HCT116 (cell line): ENCODE measurements at regions of chr6 and their contacts with region 1.

Region 1: GRCh38 chr6:170265655-170266054 is 25.2 kb downstream of the DLL1 start:
- DNase-seq: peak; percentile 73
- ATAC-seq: peak; percentile 94
- H3K4me3 ChIP-seq: peak overlapping the region in 1 of 2 experiments; percentile 19; a peak in 3 of 4 replicates
- H3K27ac ChIP-seq: no peak overlapping the region
- H3K4me1 ChIP-seq: peaks cover 6 to 10% of the 10 kb centered on the region in 2 experiments; a peak in 3 of 4 replicates
- H3K27me3 ChIP-seq: no peaks in the 10 kb centered on the region
- CTCF ChIP-seq: no peak
- POLR2A ChIP-seq: no peak
- RAD21 ChIP-seq: peak; percentile 49

Region 2: GRCh38 chr6:169831450-169832246 is 434.0 kb before region 1 on chr6:
- CTCF ChIA-PET with region 1: interaction called, 3 read pairs
- POLR2A ChIA-PET with region 1: no interaction called
- RAD21 ChIA-PET with region 1: interaction called in 1 of 2 experiments, 3 read pairs
- intact Hi-C with region 1: loop called (anchors 10 kb)
- DNase-seq: peak; percentile 38
- ATAC-seq: peak; percentile 98
- H3K4me3 ChIP-seq: no peak overlapping the region
- H3K27ac ChIP-seq: no peak overlapping the region
- H3K4me1 ChIP-seq: peaks cover 0 to 6% of the 10 kb centered on the region in 2 experiments; a peak in 1 of 4 replicates
- H3K27me3 ChIP-seq: peaks cover 5% of the 10 kb centered on the region; the same call in 1 of the 2 replicates
- CTCF ChIP-seq: peak; percentile 84 to 97 (median 89)
- POLR2A ChIP-seq: no peak
- RAD21 ChIP-seq: peak; percentile 90

Region 3: GRCh38 chr6:169959136-169960002 is 306.3 kb before region 1 on chr6:
- CTCF ChIA-PET with region 1: no interaction called
- POLR2A ChIA-PET with region 1: no interaction called
- RAD21 ChIA-PET with region 1: no interaction called
- intact Hi-C with region 1: loop called (anchors 10 kb)
- DNase-seq: no peak
- ATAC-seq: no peak
- H3K4me3 ChIP-seq: no peak overlapping the region
- H3K27ac ChIP-seq: no peak overlapping the region
- H3K4me1 ChIP-seq: no peaks in the 10 kb centered on the region
- H3K27me3 ChIP-seq: no peaks in the 10 kb centered on the region
- CTCF ChIP-seq: no peak
- POLR2A ChIP-seq: no peak
- RAD21 ChIP-seq: no peak

Region 4: GRCh38 chr6:170165072-170165463 is 100.6 kb before region 1 on chr6:
- CTCF ChIA-PET with region 1: no interaction called
- POLR2A ChIA-PET with region 1: no interaction called
- RAD21 ChIA-PET with region 1: no interaction called
- intact Hi-C with region 1: loop called (anchors 10 kb)
- DNase-seq: no peak
- ATAC-seq: no peak
- H3K4me3 ChIP-seq: no peak overlapping the region
- H3K27ac ChIP-seq: no peak overlapping the region; the same call in 1 of the 2 replicates
- H3K4me1 ChIP-seq: no peaks in the 10 kb centered on the region; a peak in 1 of 4 replicates
- H3K27me3 ChIP-seq: no peaks in the 10 kb centered on the region
- CTCF ChIP-seq: no peak
- POLR2A ChIP-seq: no peak
- RAD21 ChIP-seq: no peak

Region 5: DNA sequence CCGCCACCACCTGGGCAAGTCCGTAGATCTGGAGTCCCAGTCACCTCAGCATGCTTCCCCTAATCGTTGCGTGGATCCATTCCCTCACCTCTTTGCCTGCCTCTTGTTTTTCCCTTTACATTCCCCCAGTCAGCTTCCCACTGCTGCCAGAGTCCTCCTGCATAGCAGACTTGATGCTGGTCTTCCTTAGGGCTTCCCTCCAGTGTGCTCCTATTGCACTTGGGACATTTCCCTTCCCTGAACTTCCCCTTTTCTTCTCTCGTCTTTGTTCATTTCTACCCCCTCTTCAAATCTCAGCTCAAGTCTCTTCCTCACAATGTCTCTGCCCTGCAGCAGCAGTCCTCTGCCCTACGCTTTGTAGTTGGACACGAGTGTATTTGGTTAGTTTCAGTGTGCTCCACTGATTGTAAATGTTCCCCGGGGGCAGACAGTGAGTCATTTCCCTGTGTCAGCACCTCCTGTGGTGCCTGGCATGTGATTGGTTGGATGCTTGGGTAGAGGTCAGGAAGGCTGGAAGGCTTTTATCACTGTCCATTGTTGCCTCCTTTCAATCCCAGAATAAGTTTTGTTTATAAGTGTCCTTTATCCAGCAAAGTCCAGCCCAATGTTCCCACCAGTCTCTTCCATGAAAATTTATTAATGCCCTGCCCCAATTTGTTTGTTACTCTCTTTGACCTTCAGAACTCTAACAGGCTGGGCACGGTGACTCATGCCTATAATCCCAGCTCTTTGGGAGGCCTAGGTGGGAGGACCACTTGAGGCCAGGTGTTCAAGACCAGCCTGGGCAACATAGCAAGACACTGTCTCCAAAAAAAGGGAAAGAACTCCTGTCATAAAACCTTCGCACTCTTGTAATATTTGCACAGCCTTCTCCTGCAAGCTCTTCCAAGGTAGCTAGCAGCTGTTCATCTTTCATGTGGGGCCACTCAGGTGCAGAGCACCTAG is 79.2 kb after region 1 on chr6:
- CTCF ChIA-PET with region 1: no interaction called
- POLR2A ChIA-PET with region 1: no interaction called
- RAD21 ChIA-PET with region 1: no interaction called
- intact Hi-C with region 1: no loop called
- DNase-seq: peak; percentile 54
- ATAC-seq: peak; percentile 94
- H3K4me3 ChIP-seq: peak overlapping the region in 1 of 2 experiments; percentile 3; a peak in 1 of 4 replicates
- H3K27ac ChIP-seq: peak overlapping the region; percentile 44
- H3K4me1 ChIP-seq: peaks cover 15% of the 10 kb centered on the region in 2 experiments
- H3K27me3 ChIP-seq: no peaks in the 10 kb centered on the region
- CTCF ChIP-seq: no peak
- POLR2A ChIP-seq: no peak
- RAD21 ChIP-seq: no peak